ENCODE measurements at regions of chrX and their contacts with region 1.

Region 1: GRCh38 chrX:10111364-10112148 is 45.2 kb upstream of the CLCN4 start:
- DNase-seq: peak; percentile 19
- H3K4me3 Mint-ChIP-seq: peak overlapping the region; percentile 72
- H3K27ac Mint-ChIP-seq: peak overlapping the region; percentile 97
- H3K4me1 Mint-ChIP-seq: peaks cover 42% of the 10 kb centered on the region
- H3K27me3 Mint-ChIP-seq: no peaks in the 10 kb centered on the region

Region 2: GRCh38 chrX:10098270-10098713 is 13.3 kb before region 1 on chrX:
- intact Hi-C with region 1: loop called (anchors 1 kb)
- DNase-seq: peak; percentile 60
- H3K4me3 Mint-ChIP-seq: peak overlapping the region; percentile 76
- H3K27ac Mint-ChIP-seq: peak overlapping the region; percentile 91
- H3K4me1 Mint-ChIP-seq: peaks cover 31% of the 10 kb centered on the region
- H3K27me3 Mint-ChIP-seq: no peaks in the 10 kb centered on the region